ENCODE measurements at regions of chr6 and their contacts with region 1.

Region 1: GRCh38 chr6:154410619-154411072 is 54.0 kb upstream of the IPCEF1 start:
- DNase-seq: peak; percentile 42 to 74
- H3K4me3 ChIP-seq: no peak overlapping the region
- H3K27ac ChIP-seq: peak overlapping the region; percentile 69 to 74
- H3K4me1 ChIP-seq: peaks cover 0 to 50% (median 31%) of the 10 kb centered on the region in 4 donors
- H3K27me3 ChIP-seq: no peaks in the 10 kb centered on the region
- CTCF ChIP-seq: no peak

Region 2: GRCh38 chr6:154164397-154165165 is 246.1 kb before region 1 on chr6:
- intact Hi-C with region 1: loop called (anchors 5 kb)
- DNase-seq: peak; percentile 61 to 82
- H3K4me3 ChIP-seq: no peak overlapping the region
- H3K27ac ChIP-seq: peak overlapping the region; percentile 28 to 56
- H3K4me1 ChIP-seq: peaks cover 0 to 10% (median 5%) of the 10 kb centered on the region in 4 donors
- H3K27me3 ChIP-seq: no peaks in the 10 kb centered on the region
- CTCF ChIP-seq: no peak

Region 3: DNA sequence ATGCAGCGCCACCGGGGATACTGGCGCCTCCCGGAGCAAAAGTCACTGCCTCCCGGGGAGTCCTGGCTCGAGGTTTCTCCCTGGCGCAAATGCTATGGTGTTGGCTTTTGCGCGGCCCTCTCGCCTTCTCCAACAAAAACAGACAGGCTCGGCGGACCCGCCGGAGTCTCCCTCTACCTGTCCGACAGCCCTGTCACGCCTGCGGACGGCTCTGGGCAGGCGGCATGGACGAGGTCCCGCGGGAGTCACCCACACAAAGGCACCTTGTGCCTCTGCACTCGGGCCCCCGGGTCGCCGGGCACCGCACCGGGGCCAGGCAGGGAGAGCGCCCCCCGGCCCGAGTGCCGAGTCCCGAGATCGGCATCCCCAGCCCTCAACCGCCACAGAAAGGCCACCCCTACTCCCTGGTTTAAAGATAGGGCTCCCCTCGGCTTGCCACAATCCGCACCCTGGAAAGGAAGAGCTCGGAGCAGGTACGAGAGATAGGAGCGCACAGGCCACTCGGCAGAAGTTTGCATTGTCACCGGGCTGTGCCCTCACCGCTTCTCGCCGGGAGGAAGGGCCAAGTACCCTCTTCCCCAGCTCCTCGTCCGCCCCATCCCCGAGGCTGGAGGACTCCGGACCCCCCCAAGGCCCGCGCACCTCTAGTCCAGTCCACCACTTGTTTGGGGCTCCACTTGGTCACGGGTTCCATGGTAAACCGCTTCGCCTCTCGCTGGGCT is 98.9 kb after region 1 on chr6:
- intact Hi-C with region 1: loop called (anchors 10 kb)
- DNase-seq: peak; percentile 29 to 64
- H3K4me3 ChIP-seq: peak overlapping the region; percentile 79 to 93
- H3K27ac ChIP-seq: peak overlapping the region; percentile 93 to 98
- H3K4me1 ChIP-seq: peaks cover 0 to 48% (median 16%) of the 10 kb centered on the region in 4 donors
- H3K27me3 ChIP-seq: no peaks in the 10 kb centered on the region
- CTCF ChIP-seq: no peak

Region 4: DNA sequence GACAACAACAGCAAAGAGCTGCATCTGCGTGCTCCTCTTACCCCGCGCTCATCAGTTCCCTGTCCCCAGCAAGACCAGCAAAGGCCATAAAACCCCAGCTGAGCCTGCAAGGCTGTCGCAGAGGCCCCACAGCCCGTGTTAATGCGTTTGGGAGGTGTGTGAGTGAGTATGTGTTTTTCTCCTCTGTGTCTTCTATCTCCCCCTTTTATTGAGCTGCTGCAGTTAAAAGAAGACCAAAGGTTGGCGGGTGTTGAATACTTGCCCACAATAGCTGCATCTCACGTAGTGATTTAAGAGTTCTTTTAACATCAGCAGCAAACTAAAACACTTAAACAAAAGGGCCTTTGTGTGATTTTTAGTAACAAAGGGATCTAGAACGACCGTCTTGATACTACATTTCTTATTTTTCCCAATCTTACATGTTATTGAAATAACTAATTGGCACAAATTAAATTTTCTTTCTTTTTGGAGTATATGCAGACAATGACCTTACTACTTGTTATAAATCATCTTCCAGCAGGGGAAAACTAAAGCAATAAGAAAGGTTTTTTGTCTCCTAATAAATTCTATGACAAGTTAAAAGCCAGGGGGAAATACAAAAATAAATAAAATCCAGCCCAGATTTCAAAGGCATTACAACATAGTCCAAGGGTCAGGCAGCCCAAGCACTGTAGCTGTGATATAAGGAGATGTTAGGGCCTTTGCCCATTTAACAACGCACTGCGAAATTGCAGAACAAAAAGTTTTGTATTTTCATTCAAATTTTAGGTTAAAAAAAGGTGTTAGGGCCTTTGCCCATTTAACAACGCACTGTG is 127.1 kb after region 1 on chr6:
- intact Hi-C with region 1: no loop called
- DNase-seq: no peak
- H3K4me3 ChIP-seq: no peak overlapping the region
- H3K27ac ChIP-seq: no peak overlapping the region
- H3K4me1 ChIP-seq: peaks cover 0 to 13% (median 0%) of the 10 kb centered on the region in 4 donors
- H3K27me3 ChIP-seq: no peaks in the 10 kb centered on the region
- CTCF ChIP-seq: no peak

Measured in tibial artery (tissue), 4 donors.